Activated CD4-positive, alpha-beta T cell treated with anti-CD3 and anti-CD28 coated beads, Interleukin-2, amount 10 ng/mL, durations not matched to agents 24 days and 14 days (primary cell): ENCODE measurements at regions of chr4 and their contacts with region 1.

Region 1: GRCh38 chr4:2963175-2963965 is at the starts of genes GRK4 and NOP14:
- DNase-seq: peak; percentile 99
- H3K4me3 Mint-ChIP-seq: peak within 1 kb of the TSS; percentile 87
- H3K27ac Mint-ChIP-seq: peak within 1 kb of the TSS; percentile 79
- H3K4me1 Mint-ChIP-seq: peaks cover 27% of the 10 kb centered on the region
- H3K27me3 Mint-ChIP-seq: no peaks in the 10 kb centered on the region
- total RNA-seq, gene GRK4: 4.6 and 5.3 TPM in 2 replicates
- total RNA-seq, gene NOP14: 132 and 141 TPM in 2 replicates

Region 2: DNA sequence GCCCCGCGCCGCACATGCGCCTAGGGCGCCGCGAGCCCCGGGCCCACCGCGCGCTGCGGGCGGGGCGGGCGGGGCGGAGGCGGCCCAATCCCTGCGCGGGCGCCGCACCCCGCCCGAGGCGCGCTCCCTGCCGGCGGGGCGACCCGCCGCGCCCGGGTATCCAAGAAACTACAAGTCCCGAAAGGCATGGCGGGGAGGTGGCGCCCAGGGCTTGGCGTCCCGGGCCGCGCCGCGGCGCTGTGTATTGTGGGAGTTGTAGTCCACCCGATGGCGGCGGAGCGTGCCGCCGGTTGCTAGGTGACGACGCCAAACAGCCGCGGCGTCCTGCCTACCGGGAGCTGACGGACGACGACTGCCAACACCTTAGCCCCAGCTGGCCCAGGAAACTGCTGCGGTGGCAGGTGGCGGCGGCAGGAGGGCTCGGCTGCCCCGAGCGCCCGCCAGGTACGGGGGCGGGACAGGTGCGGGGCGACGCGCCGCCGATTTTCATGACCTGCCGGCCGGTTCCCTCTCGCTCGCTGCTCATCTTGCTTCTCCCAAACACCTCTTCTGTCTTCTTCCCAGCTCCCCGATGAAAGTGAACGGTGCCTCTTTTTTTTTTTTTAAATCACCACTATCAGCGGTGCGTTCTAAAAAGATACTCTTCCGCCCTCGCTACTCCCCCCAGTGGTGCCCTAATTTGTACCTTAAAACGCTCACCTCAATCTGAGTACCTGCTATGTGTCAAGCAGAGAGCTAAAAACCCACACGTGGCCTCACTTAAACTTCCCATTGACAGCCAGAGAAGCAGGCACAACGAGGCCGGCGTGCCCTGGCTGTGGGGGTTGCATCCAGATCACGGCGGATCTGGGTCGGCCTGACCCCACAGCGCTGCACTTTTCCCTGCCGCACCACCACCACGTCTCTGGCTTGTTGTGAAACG is 544.5 kb before region 1 on chr4 and contains the start of gene CFAP99:
- intact Hi-C with region 1: loop called (anchors 1 kb)
- DNase-seq: peak; percentile 98
- H3K4me3 Mint-ChIP-seq: peak within 1 kb of the TSS; percentile 91
- H3K27ac Mint-ChIP-seq: peak within 1 kb of the TSS; percentile 86
- H3K4me1 Mint-ChIP-seq: peaks cover 35% of the 10 kb centered on the region
- H3K27me3 Mint-ChIP-seq: peaks cover 59% of the 10 kb centered on the region
- total RNA-seq, gene CFAP99: not detected in 2 replicates

Region 3: GRCh38 chr4:2934813-2935761 is 28.3 kb before region 1 on chr4:
- intact Hi-C with region 1: loop called (anchors 1 kb)
- DNase-seq: peak; percentile 99
- H3K4me3 Mint-ChIP-seq: peak overlapping the region; percentile 90
- H3K27ac Mint-ChIP-seq: peak overlapping the region; percentile 93
- H3K4me1 Mint-ChIP-seq: peaks cover 42% of the 10 kb centered on the region
- H3K27me3 Mint-ChIP-seq: no peaks in the 10 kb centered on the region

Region 4: GRCh38 chr4:3201718-3202702 is 238.6 kb after region 1 on chr4:
- intact Hi-C with region 1: loop called (anchors 1 kb)
- DNase-seq: peak; percentile 94
- H3K4me3 Mint-ChIP-seq: peak overlapping the region; percentile 47
- H3K27ac Mint-ChIP-seq: peak overlapping the region; percentile 96
- H3K4me1 Mint-ChIP-seq: peaks cover 37% of the 10 kb centered on the region
- H3K27me3 Mint-ChIP-seq: no peaks in the 10 kb centered on the region